ENCODE measurements at regions of chr5 and their contacts with region 1.

Region 1: GRCh38 chr5:149990518-149991376 is 9.7 kb downstream of the TIGD6 start:
- DNase-seq: peak; percentile 58 to 78 (median 70)
- H3K4me3 ChIP-seq: no peak overlapping the region
- H3K27ac ChIP-seq: no peak overlapping the region
- H3K4me1 ChIP-seq: no peaks in the 10 kb centered on the region
- H3K27me3 ChIP-seq: no peaks in the 10 kb centered on the region
- CTCF ChIP-seq: peak; percentile 61 to 84 (median 82)
- EP300 ChIP-seq: no peak
- POLR2A ChIP-seq: no peak

Region 2: DNA sequence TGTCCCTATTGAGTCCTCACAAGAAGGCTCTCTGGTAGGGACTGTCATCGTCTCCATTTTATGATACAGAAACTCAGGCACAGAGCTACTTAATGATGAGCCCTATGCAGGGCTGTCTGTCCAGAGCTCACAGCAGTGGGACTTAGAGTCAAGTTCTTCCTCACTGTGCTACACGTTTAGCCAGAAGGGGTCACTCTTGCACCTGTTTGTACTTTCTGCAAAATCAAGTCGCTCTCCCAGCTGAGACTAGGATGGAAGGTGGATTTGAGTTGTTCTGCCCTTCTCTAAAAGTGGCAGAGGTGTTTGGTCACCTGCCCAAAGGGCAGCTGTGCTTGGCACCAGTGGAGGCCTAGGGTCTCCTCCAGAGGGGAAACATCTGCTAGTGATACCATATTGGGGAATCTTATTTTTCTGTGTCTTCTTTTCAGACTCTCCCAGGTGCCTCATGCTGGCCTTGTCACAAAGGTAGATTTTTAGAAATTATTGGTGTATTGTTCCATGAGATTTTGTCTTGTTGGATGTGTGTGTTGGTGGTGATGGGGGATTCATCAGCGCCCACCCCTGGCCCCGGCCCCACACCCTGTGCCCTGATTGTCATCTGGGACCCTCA is 156.4 kb before region 1 on chr5:
- intact Hi-C with region 1: loop called (anchors 5 to 10 kb)
- DNase-seq: peak in 4 of 5 donors; percentile 49 to 70 (median 56)
- H3K4me3 ChIP-seq: no peak overlapping the region
- H3K27ac ChIP-seq: no peak overlapping the region
- H3K4me1 ChIP-seq: no peaks in the 10 kb centered on the region
- H3K27me3 ChIP-seq: no peaks in the 10 kb centered on the region
- CTCF ChIP-seq: peak in 2 of 3 donors; percentile 17 to 65
- EP300 ChIP-seq: no peak
- POLR2A ChIP-seq: no peak

Region 3: GRCh38 chr5:149852641-149853330 is 138.0 kb before region 1 on chr5:
- intact Hi-C with region 1: loop called in 1 of 4 experiments (anchors 5 kb)
- DNase-seq: peak; percentile 69 to 80 (median 79)
- H3K4me3 ChIP-seq: no peak overlapping the region
- H3K27ac ChIP-seq: no peak overlapping the region
- H3K4me1 ChIP-seq: no peaks in the 10 kb centered on the region
- H3K27me3 ChIP-seq: no peaks in the 10 kb centered on the region
- CTCF ChIP-seq: peak; percentile 66 to 71 (median 69)
- EP300 ChIP-seq: no peak
- POLR2A ChIP-seq: no peak

Region 4: GRCh38 chr5:150085950-150086715 is 95.4 kb after region 1 on chr5 and contains the start of gene CSF1R:
- intact Hi-C with region 1: no loop called
- DNase-seq: no peak
- H3K4me3 ChIP-seq: no peak within 1 kb of the TSS
- H3K27ac ChIP-seq: no peak within 1 kb of the TSS
- H3K4me1 ChIP-seq: no peaks in the 10 kb centered on the region
- H3K27me3 ChIP-seq: no peaks in the 10 kb centered on the region
- CTCF ChIP-seq: no peak
- EP300 ChIP-seq: no peak
- POLR2A ChIP-seq: no peak
- total RNA-seq, gene CSF1R: 7.6 to 25.3 (median 16.4) TPM

Measured in ovary (tissue), 10 donors.